ENCODE measurements at regions of chr6 and their contacts with region 1.

Region 1: GRCh38 chr6:31690231-31691077 is 9.6 kb upstream of the LY6G5C start:
- DNase-seq: no peak
- ATAC-seq: no peak
- H3K4me3 ChIP-seq: no peak overlapping the region
- H3K27ac ChIP-seq: no peak overlapping the region
- H3K4me1 ChIP-seq: no peaks in the 10 kb centered on the region
- H3K27me3 ChIP-seq: no peaks in the 10 kb centered on the region
- CTCF ChIP-seq: no peak

Region 2: GRCh38 chr6:31597006-31597405 is 93.4 kb before region 1 on chr6:
- CTCF ChIA-PET with region 1: no interaction called
- POLR2A ChIA-PET with region 1: no interaction called
- in situ Hi-C with region 1: no loop called
- intact Hi-C with region 1: no loop called
- DNase-seq: no peak
- ATAC-seq: peak; percentile 64
- H3K4me3 ChIP-seq: no peak overlapping the region
- H3K27ac ChIP-seq: no peak overlapping the region
- H3K4me1 ChIP-seq: 0 out of 2 replicates have a peak, but pooled peaks cover 2% of the 10 kb centered on the region
- H3K27me3 ChIP-seq: no peaks in the 10 kb centered on the region
- CTCF ChIP-seq: peak; percentile 74

Region 3: GRCh38 chr6:31806465-31807272 is 116.2 kb after region 1 on chr6 and contains the start of gene LSM2:
- CTCF ChIA-PET with region 1: no interaction called
- POLR2A ChIA-PET with region 1: interaction called, 11 read pairs
- in situ Hi-C with region 1: no loop called
- intact Hi-C with region 1: no loop called
- DNase-seq: no peak
- ATAC-seq: peak; percentile 99
- H3K4me3 ChIP-seq: peak within 1 kb of the TSS; percentile 85 to 99
- H3K27ac ChIP-seq: peak within 1 kb of the TSS; percentile 97
- H3K4me1 ChIP-seq: peaks cover 8% of the 10 kb centered on the region
- H3K27me3 ChIP-seq: no peaks in the 10 kb centered on the region
- CTCF ChIP-seq: no peak; the same call in 1 of the 2 replicates
- total RNA-seq, gene LSM2: 89.7 TPM